ENCODE measurements at regions of chr20 and their contacts with region 1.

Region 1: GRCh38 chr20:63309261-63310071 is 16.5 kb downstream of the COL20A1 start:
- DNase-seq: no peak
- H3K4me3 ChIP-seq: no peak overlapping the region
- CTCF ChIP-seq: peak in 1 of 3 donors; percentile 8
- POLR2A ChIP-seq: no peak

Region 2: DNA sequence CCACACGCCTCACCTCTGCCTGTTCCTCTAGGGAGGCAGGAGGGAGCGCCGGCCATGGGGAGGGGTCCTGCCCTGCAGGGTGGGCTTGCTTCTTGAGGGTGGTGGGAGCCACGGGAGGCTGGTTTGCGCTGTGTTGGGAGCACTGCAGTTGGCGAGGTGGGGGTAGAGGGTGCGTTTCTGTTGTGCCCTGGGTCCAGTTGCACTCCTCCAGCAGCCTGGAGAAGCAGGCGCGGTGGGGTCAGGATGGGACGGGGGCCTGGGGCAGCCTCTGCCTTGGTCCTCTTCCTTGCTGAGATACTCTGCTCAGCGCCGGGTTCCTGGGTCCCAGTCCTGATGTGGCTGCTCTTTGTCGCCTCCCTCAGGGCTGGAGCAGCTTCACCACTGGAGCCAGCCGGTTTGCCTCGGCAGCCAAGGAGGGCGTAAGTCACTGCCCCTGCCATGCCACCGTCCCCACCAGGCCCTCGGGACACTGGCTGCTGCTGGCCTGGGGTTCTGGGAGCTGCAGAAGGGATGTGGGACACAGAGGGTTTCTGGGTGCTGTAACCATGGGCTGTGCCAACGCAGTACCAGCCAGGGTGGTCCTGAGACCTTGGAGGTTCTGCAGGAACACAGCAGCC is 28.4 kb before region 1 on chr20:
- intact Hi-C with region 1: no loop called
- DNase-seq: no peak
- H3K4me3 ChIP-seq: no peak overlapping the region
- CTCF ChIP-seq: no peak
- POLR2A ChIP-seq: no peak

Region 3: GRCh38 chr20:63381807-63382322 is 72.4 kb after region 1 on chr20:
- intact Hi-C with region 1: loop called (anchors 10 kb)
- DNase-seq: no peak
- H3K4me3 ChIP-seq: no peak overlapping the region
- CTCF ChIP-seq: peak in 1 of 3 donors; percentile 57
- POLR2A ChIP-seq: no peak

Measured in lower leg skin (tissue), 4 donors.